ENCODE measurements at regions of chr1 and their contacts with region 1.

Region 1: DNA sequence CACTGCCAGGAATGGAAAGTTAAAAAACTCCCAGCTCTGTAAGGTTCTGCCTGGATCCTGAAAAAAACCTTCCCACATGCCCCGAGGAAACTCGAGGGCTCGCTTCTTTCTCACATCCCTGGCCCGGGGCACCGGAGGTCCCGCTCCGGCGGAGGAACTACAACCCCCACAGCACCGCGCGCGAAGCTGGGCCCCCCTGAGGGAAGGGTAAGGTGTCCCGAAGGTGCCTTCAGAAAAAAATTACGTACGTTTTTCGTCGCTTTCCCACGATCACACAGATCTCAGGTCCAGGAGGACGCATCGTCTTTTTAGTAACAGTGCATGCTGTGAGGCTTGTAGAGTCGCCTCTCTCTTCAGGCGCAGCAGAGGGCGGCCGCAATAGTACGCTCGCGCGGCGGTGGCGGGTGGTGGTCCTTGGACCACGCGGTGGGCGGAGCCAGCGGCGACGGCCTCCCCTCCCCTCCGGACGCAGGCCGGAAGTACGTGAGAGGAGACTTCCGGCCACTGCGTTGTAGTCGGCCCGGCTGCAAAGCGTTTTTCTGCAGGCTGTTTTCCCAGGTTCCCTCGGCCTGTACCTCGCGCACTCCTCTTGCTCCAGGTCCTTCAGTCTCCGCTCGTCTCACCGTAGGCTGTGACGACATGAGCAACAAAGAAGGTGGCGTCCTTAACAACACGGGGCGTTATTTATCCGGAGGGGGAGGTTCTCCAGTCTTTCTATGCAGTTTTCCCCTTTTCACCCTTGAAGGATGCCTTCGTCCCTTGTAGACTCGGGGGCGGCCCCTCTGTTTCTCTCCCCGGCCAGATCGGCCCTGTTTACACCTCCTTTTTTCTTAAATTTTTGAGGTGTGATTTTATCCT is at the start of gene TSNAX:
- DNase-seq: peak; percentile 97
- H3K4me3 Mint-ChIP-seq: peak within 1 kb of the TSS; percentile 92
- H3K27ac Mint-ChIP-seq: peak within 1 kb of the TSS; percentile 97
- H3K4me1 Mint-ChIP-seq: peaks cover 32% of the 10 kb centered on the region
- H3K27me3 Mint-ChIP-seq: no peaks in the 10 kb centered on the region
- total RNA-seq, gene TSNAX: 41.4 and 42.7 TPM in 2 replicates

Region 2: GRCh38 chr1:230867903-230868735 is 660.3 kb before region 1 on chr1 and contains the start of gene C1orf198:
- intact Hi-C with region 1: loop called (anchors 5 kb)
- DNase-seq: peak; percentile 91
- H3K4me3 Mint-ChIP-seq: peak within 1 kb of the TSS; percentile 89
- H3K27ac Mint-ChIP-seq: peak within 1 kb of the TSS; percentile 84
- H3K4me1 Mint-ChIP-seq: peaks cover 31% of the 10 kb centered on the region
- H3K27me3 Mint-ChIP-seq: peaks cover 35% of the 10 kb centered on the region
- total RNA-seq, gene C1orf198: 12.4 and 13.7 TPM in 2 replicates

Region 3: DNA sequence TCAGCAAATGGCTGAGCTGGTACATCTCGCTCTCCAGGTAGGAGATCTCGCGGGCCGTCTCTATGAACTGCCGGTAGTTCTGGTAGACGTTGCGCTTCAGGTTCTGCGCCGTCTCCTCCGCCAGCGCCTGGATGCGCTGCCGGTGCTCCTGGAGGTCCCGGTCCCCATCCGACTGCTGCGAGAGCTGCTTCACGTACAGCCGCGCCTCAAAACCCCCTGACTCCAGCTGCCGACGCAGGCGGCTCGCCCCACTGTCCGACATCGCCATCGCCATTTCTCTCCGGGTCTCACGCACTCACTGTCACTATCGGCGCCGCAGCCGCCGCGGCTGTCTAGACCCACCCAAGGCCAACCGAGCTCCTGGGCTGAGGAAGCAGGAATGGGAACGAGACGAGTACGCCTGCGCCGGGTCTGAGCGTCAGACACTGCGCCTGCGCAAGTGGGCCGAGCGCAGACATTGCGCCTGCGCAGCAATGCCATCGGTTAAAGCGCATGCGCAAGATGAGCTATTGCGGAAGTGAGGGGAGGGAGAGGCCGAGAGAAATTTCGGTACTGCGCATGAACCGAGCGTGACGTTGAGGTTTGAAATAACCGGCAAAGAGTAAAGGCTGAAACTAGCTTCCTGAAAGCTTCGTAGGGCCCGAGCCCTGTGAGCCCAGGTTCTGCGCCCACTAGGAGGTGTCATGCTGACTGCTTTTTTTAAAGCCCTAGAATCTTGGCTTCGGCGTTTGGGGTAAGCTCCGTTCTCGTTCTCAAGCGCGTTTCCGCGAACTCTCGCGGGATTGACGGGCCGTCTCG is 190.7 kb before region 1 on chr1 and contains the start of gene EXOC8:
- intact Hi-C with region 1: loop called (anchors 1 kb)
- DNase-seq: peak; percentile 100
- H3K4me3 Mint-ChIP-seq: peak within 1 kb of the TSS; percentile 95
- H3K27ac Mint-ChIP-seq: peak within 1 kb of the TSS; percentile 98
- H3K4me1 Mint-ChIP-seq: peaks cover 44% of the 10 kb centered on the region
- H3K27me3 Mint-ChIP-seq: peaks cover 3% of the 10 kb centered on the region
- total RNA-seq, gene EXOC8: 12.4 and 13.3 TPM in 2 replicates

Region 4: DNA sequence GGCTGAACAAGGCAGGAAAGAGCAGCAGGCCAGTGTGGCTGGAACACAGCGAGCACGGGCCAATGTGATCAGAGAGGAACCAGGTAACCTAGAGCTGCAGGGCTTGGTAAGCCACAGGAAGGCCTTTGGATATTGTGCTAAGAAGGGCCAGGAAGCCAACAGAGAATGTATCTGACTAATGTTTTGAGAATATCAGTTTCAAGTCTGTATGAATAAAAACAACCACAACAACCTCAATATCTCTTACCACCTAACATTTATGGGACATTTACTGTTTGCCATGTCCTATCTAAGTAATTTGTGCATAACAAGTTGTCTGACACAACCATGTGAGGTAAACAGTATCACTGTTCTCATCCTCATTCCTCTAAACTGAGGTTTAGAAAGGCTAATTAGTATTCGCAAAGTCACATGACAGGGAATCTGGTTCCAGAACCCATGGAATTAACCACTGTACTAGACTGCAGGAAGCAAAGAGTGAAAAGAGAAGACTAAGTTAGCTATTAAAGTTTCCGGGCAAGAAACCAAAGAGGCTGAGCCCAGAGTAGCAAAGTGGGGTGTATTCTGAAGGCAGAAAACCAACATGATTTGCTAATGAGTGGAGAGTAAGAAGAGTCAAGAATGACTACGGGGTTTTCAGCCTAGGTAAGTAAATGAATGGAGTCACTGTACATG is 151.4 kb before region 1 on chr1:
- intact Hi-C with region 1: loop called (anchors 1 kb)
- DNase-seq: peak; percentile 72
- H3K4me3 Mint-ChIP-seq: peak overlapping the region; percentile 17
- H3K27ac Mint-ChIP-seq: peak overlapping the region; percentile 76
- H3K4me1 Mint-ChIP-seq: peaks cover 28% of the 10 kb centered on the region
- H3K27me3 Mint-ChIP-seq: no peaks in the 10 kb centered on the region

Region 5: DNA sequence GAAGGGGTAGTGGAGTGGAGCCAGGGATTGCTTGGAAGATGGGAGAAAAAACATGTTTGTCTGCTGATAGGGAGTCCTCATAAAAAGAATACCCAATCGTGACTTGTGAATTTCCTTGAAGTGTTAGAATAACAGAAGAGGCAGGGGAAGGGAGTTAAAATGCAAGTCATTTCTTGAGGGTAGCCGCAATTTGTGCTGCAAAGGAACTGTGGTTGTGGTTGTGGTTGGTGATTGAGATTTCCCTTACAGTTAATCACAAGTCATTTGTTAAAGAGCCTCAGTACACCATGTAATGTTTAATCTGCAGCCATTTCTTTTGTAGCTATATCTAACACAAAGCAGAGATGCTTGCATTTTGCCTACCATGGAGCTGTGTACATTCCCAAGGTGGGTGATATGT is 67.8 kb before region 1 on chr1:
- intact Hi-C with region 1: loop called (anchors 1 kb)
- DNase-seq: peak; percentile 92
- H3K4me3 Mint-ChIP-seq: no peak overlapping the region
- H3K27ac Mint-ChIP-seq: peak overlapping the region; percentile 66
- H3K4me1 Mint-ChIP-seq: peaks cover 35% of the 10 kb centered on the region
- H3K27me3 Mint-ChIP-seq: peaks cover 69% of the 10 kb centered on the region

Region 6: GRCh38 chr1:231544943-231545592 is 16.7 kb after region 1 on chr1:
- intact Hi-C with region 1: no loop called
- DNase-seq: no peak
- H3K4me3 Mint-ChIP-seq: no peak overlapping the region
- H3K27ac Mint-ChIP-seq: no peak overlapping the region
- H3K4me1 Mint-ChIP-seq: peaks cover 3% of the 10 kb centered on the region
- H3K27me3 Mint-ChIP-seq: no peaks in the 10 kb centered on the region